Ovary (tissue), 10 donors: ENCODE measurements at regions of chr20 and their contacts with region 1.

Region 1: DNA sequence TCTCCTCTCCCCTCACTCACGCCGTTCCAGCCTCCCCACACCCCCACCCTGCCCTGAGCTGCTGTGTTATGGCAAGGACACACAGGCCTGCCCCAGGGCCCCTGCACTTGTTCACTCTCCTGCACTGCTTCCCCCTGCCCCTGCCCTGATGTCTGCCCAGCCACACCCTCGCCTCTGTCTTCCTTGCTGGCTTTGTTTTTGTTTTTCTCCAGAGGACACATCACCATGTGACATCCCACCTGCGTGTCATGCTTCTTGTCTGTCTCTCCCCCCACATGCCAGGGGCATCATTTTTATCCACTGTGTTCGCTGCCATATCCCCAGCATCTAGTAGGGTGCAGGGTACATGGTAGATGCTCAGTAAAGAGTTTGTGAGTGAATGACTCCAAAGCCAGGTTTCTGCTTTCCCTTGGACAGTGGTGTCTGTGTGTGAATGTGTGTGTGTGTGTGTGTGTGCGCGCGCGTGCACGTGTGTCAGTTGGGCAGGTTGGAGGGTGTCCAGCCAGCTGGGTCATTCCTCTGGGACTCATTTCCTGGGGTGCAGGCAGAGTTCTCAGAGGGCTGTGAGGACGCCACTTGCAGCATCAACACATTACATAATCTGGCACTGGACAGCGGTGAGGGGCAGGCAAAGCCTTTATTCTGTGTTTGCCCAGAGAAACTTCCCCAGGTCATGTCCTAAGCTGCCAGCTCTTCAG is 60.6 kb downstream of the STK35 start:
- DNase-seq: no peak
- H3K4me3 ChIP-seq: no peak overlapping the region
- H3K27ac ChIP-seq: no peak overlapping the region
- H3K4me1 ChIP-seq: no peaks in the 10 kb centered on the region
- H3K27me3 ChIP-seq: no peaks in the 10 kb centered on the region
- CTCF ChIP-seq: no peak
- EP300 ChIP-seq: no peak
- POLR2A ChIP-seq: no peak

Region 2: DNA sequence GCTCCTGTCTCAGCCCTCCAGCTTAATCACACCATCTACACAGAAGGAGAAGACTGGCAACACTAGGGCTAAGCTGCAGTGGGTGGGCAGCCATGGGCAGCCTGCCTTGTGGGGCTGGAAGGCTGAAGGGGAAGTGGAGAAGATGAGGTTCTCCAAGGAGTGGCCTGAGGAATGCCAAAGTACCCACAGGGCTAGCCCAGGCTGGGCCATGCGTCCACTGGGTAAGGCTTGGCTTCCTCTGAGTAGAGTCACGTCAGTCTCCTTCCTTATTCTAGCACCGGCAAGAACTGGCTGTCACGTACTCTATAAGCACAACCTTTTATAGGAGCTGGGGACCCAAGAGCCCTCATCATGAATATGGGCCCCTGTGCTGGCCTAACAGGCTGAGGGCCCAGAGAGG is 377.7 kb before region 1 on chr20:
- intact Hi-C with region 1: loop called in 1 of 4 experiments (anchors 10 kb)
- DNase-seq: no peak
- H3K4me3 ChIP-seq: no peak overlapping the region
- H3K27ac ChIP-seq: no peak overlapping the region
- H3K4me1 ChIP-seq: no peaks in the 10 kb centered on the region
- H3K27me3 ChIP-seq: no peaks in the 10 kb centered on the region
- CTCF ChIP-seq: no peak
- EP300 ChIP-seq: no peak
- POLR2A ChIP-seq: no peak

Region 3: GRCh38 chr20:1965520-1966351 is 196.5 kb before region 1 on chr20:
- intact Hi-C with region 1: loop called in 1 of 4 experiments (anchors 10 kb)
- DNase-seq: peak; percentile 67 to 83 (median 79)
- H3K4me3 ChIP-seq: no peak overlapping the region
- H3K27ac ChIP-seq: no peak overlapping the region
- H3K4me1 ChIP-seq: no peaks in the 10 kb centered on the region
- H3K27me3 ChIP-seq: no peaks in the 10 kb centered on the region
- CTCF ChIP-seq: peak; percentile 81 to 86 (median 83)
- EP300 ChIP-seq: no peak
- POLR2A ChIP-seq: no peak

Region 4: DNA sequence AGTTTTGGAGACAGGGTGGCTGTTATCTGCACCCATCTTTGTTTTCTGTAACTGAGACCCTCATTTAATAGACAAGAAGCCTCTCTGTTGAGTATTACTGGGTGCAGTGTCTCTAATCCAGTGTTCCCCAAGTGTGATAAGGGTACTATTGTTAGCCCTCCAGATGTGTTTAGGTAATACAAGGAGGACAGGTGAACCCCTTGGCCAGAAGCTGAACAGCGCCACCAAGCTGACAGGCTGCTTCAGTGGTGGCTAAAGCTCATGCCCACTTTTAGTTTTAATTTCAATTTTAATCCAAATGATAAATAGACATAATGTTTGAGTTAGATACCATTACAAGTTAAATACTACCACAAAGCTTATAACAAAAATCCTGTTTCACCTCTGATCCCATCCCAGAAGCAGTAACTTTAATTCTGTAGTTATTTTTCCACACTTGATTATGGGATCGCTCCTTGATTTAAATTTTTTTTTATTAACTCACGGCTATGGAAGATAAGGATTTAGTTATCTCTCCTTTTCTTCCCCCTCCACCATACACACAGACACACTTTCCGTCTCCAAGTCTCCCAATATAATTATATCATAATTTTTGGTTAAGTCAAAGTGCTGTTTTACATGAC is 69.0 kb before region 1 on chr20:
- intact Hi-C with region 1: loop called in 1 of 4 experiments (anchors 10 kb)
- DNase-seq: no peak
- H3K4me3 ChIP-seq: no peak overlapping the region
- H3K27ac ChIP-seq: no peak overlapping the region
- H3K4me1 ChIP-seq: no peaks in the 10 kb centered on the region
- H3K27me3 ChIP-seq: no peaks in the 10 kb centered on the region
- CTCF ChIP-seq: no peak
- EP300 ChIP-seq: no peak
- POLR2A ChIP-seq: no peak